Endothelial cell of umbilical vein (primary cell): ENCODE measurements at regions of chr17 and their contacts with region 1.

Region 1: DNA sequence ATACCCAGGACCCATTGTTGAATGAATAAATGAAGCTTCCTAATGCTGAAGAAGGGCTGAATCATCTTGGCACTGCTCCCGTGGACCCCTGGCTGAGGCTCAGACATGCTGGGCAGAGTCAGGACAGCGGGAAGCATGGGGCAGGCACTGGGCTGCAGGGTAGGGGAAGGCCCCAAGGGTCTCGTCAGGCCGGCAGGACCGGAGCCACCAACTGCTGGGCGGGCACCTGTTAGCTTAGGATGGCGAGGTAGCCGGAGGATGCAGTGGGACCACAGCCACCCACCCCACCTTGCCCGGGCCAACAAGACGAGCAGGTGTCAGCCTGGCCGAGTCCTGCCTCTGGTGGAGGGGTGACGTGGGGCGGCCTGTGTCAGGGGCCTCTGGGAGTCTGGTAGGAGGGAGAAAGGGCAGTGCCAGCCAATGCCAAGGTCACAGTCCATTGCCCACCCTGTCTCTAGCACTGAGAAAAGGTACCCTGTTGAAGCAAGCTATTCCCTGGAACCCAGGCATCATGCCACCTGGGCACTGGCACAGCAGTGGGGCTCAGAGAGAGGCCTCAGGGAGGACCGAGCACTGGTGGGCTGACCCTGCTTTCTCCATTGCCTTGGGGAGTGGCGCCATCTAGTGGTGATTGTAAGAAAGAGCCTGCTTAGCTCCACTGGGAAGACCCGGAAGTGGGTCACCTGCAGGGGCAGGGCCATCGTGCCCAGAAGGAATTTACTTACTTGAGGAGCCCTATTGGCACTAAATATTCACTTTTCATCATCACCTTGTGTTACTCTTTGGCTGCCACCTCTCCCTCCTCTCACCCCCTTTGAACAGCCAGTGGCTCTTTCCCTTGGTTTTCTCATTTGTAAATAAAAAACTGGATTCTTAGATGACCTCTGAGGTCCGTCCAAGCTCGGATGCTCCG is 3.0 kb upstream of the DLX3 start:
- DNase-seq: peak; percentile 74
- H3K4me3 ChIP-seq: no peak overlapping the region
- H3K27ac ChIP-seq: no peak overlapping the region
- H3K4me1 ChIP-seq: no peaks in the 10 kb centered on the region
- H3K27me3 ChIP-seq: peaks cover 41 to 53% of the 10 kb centered on the region in 2 experiments
- CTCF ChIP-seq: peak; percentile 83 to 87
- POLR2A ChIP-seq: no peak

Region 2: GRCh38 chr17:49567871-49568694 is 430.0 kb before region 1 on chr17:
- CTCF ChIA-PET with region 1: interaction called, 39 read pairs
- POLR2A ChIA-PET with region 1: no interaction called
- dilution Hi-C with region 1: no loop called
- intact Hi-C with region 1: loop called (anchors 1 kb)
- DNase-seq: peak; percentile 79
- H3K4me3 ChIP-seq: peak overlapping the region; percentile 10 to 34 (median 25)
- H3K27ac ChIP-seq: no peak overlapping the region
- H3K4me1 ChIP-seq: peaks cover 5% of the 10 kb centered on the region
- H3K27me3 ChIP-seq: peaks cover 6 to 16% of the 10 kb centered on the region in 2 experiments
- CTCF ChIP-seq: peak; percentile 90 to 93
- POLR2A ChIP-seq: no peak

Region 3: DNA sequence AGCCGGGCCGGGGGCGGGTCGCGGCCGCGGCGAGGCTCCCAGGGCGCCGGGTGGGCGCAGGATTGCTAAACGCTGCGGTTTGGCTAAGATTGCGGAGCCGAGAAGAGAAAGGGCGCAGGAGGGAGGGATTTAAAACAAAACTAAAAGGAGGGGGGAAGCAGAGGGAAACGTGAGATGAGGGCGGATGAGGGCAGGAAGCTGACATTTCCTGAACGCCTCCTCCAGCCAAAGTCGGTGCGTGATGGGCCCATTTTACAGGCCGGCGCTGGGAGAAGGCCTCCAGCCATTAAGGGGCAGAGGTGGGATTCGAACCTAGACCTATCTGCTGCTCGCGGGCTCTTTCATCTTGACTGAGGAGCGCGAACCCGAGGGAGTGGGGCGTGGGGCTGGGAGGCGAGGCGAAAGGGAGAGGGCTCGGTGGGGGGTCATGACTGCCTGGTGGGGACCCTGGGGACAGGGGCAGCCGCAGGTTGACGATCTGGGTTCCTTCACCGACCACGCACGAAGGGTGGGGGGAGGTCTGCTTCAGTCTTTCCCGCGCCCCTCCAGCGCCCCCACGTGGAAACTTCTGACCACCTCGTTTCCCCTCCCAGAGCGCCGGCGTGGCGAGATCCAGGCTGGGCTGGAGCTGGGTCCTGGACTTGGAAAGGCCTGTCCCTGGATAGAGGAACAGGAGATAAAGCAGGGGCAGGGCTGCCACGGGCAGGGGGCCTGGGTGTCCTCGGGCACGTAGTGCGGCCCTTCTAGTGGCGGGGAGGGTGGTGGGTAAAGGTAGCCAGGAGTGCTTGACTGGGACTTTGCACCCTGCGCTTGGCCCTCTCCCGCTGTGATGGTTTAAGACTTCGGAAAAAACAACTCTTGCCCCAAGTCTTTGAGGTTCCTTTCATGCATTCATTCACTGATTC is 146.4 kb before region 1 on chr17:
- CTCF ChIA-PET with region 1: interaction called, 590 read pairs
- POLR2A ChIA-PET with region 1: no interaction called
- dilution Hi-C with region 1: no loop called
- intact Hi-C with region 1: no loop called
- DNase-seq: peak; percentile 73
- H3K4me3 ChIP-seq: peak overlapping the region; percentile 18 to 41 (median 36)
- H3K27ac ChIP-seq: peak overlapping the region; percentile 1
- H3K4me1 ChIP-seq: peaks cover 6% of the 10 kb centered on the region
- H3K27me3 ChIP-seq: no peaks in the 10 kb centered on the region
- CTCF ChIP-seq: peak; percentile 71 to 92
- POLR2A ChIP-seq: no peak

Region 4: GRCh38 chr17:49887086-49888028 is 110.7 kb before region 1 on chr17:
- CTCF ChIA-PET with region 1: interaction called, 29 read pairs
- POLR2A ChIA-PET with region 1: no interaction called
- dilution Hi-C with region 1: no loop called
- intact Hi-C with region 1: no loop called
- DNase-seq: no peak
- H3K4me3 ChIP-seq: no peak overlapping the region
- H3K27ac ChIP-seq: no peak overlapping the region
- H3K4me1 ChIP-seq: no peaks in the 10 kb centered on the region
- H3K27me3 ChIP-seq: peaks cover 32 to 40% of the 10 kb centered on the region in 2 experiments
- CTCF ChIP-seq: no peak
- POLR2A ChIP-seq: no peak

Region 5: GRCh38 chr17:49976163-49976827 is 21.8 kb before region 1 on chr17:
- CTCF ChIA-PET with region 1: interaction called, 10 read pairs
- POLR2A ChIA-PET with region 1: no interaction called
- dilution Hi-C with region 1: no loop called
- intact Hi-C with region 1: no loop called
- DNase-seq: no peak
- H3K4me3 ChIP-seq: no peak overlapping the region
- H3K27ac ChIP-seq: no peak overlapping the region
- H3K4me1 ChIP-seq: no peaks in the 10 kb centered on the region
- H3K27me3 ChIP-seq: peaks cover 65 to 76% of the 10 kb centered on the region in 2 experiments
- CTCF ChIP-seq: no peak
- POLR2A ChIP-seq: no peak

Region 6: DNA sequence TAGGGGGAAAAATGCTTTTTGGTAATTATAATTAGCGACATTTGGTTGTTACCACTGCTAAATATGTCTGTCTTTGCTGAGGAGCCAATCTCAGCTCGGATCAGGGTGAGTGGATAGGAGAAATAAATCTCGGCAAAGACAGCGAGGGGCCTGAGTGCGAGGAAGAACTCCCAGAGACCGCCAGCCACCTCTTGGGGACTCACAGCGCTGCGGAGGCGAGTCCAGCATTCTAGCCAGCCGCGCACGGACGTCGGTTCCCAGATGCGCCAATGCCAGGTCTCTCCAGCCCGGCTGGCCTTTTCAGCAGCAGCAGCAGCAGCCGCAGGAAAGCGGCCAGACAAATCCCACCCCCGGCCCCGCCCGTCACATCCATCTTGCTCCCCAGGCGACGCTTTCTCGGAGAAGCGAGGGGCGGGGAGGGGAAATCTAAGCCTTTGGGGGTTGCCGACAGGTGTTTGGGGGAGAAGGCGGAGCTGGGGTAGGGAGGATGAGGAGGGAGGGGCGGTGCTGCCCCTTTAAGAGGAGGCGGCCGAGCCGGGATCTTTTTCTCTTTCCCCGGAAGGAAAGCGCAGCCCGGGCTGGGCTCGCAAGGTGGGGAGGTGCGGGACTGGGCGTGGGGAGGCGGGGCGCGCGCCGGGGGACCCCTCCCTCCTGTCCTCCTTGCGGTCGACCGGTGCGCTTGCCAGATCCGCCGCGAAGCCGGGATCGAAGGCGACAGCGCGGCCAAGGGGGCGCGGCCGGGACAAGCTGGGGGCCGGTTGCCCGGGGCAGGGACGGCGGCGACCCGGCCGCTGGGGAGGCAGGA is 57.6 kb after region 1 on chr17 and contains the start of gene ITGA3:
- CTCF ChIA-PET with region 1: interaction called, 10 read pairs
- POLR2A ChIA-PET with region 1: no interaction called
- dilution Hi-C with region 1: no loop called
- intact Hi-C with region 1: no loop called
- DNase-seq: peak; percentile 80
- H3K4me3 ChIP-seq: peak within 1 kb of the TSS; percentile 65 to 77 (median 77)
- H3K27ac ChIP-seq: peak within 1 kb of the TSS; percentile 39
- H3K4me1 ChIP-seq: peaks cover 65% of the 10 kb centered on the region
- H3K27me3 ChIP-seq: no peaks in the 10 kb centered on the region
- CTCF ChIP-seq: no peak
- POLR2A ChIP-seq: peak; percentile 57
- total RNA-seq, gene ITGA3: 93.8 and 112 TPM in 2 replicates

Region 7: DNA sequence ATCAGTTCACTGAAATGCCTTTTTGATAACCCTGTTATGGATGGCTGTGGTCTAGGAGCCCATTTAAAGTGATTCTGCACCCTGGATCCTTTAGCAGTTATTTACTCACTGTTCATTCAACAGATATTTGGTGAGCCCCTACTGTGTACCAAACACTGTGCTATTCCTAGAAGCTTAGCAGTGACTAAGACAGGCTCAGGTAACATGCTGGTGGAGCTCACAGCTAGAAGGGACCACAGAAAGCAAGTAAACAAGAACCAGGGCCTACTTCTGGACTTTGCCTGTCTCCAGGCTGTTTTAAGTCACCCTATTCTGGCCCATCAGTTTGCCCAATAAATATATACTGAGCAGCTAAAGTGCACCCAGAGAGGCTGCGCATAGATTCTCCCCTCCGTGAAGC is 68.9 kb after region 1 on chr17:
- CTCF ChIA-PET with region 1: no interaction called
- POLR2A ChIA-PET with region 1: no interaction called
- dilution Hi-C with region 1: no loop called
- intact Hi-C with region 1: no loop called
- DNase-seq: no peak
- H3K4me3 ChIP-seq: no peak overlapping the region
- H3K27ac ChIP-seq: no peak overlapping the region
- H3K4me1 ChIP-seq: peaks cover 24% of the 10 kb centered on the region
- H3K27me3 ChIP-seq: no peaks in the 10 kb centered on the region
- CTCF ChIP-seq: no peak
- POLR2A ChIP-seq: no peak